Activated CD4-positive, alpha-beta memory T cell treated with anti-CD3 and anti-CD28 coated beads, Interleukin-2, amount 10 ng/mL, durations not matched to agents 7 days and 5 days (primary cell): ENCODE measurements at regions of chr12 and their contacts with region 1.

Region 1: GRCh38 chr12:53267999-53268647 is at the start of gene ESPL1:
- DNase-seq: peak; percentile 87
- H3K4me3 Mint-ChIP-seq: peak within 1 kb of the TSS; percentile 98
- H3K27ac Mint-ChIP-seq: peak within 1 kb of the TSS; percentile 90
- H3K4me1 Mint-ChIP-seq: peaks cover 53% of the 10 kb centered on the region
- H3K27me3 Mint-ChIP-seq: no peaks in the 10 kb centered on the region
- total RNA-seq, gene ESPL1: 88.4 to 90.2 TPM

Region 2: DNA sequence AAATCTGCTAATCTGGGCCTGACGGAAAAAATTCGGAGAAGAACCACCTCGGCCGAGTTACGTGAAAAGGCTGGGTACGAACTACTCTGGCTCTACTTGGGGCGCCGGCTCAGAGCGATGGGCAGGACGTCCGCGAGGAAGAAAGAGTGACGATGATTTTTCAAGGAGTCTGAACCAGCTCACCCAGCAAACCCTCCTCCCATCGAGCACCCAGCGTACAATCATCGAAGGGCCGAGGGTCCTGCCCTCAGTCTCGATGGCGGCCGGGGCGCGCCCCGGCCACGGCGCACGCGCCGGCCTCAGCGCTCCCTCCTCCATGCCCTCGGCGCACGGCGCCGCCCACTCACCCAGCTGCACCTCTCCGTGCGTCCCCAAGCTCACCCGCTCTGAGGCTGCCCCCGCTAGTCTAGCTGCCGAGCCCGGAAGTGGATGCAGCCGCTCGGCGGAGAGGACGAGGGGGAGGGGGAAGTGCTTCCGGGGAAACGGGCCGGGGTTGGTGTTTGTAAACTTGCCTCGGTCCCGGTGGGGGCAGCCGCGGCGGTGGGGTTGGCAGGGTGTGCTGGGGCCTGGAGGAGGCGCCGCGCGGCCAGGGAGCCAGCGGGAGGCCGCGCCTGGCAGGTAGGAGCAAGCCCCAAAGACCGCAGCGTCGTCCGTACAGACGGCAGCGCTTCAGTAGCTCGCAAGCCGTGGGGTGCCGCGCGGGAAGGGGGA is 87.7 kb before region 1 on chr12 and contains the starts of genes CSAD and ZNF740:
- CTCF ChIA-PET with region 1: interaction called, 13 read pairs
- POLR2A ChIA-PET with region 1: interaction called, 33 read pairs
- DNase-seq: peak; percentile 98
- H3K4me3 Mint-ChIP-seq: peak within 1 kb of the TSS; percentile 84
- H3K27ac Mint-ChIP-seq: peak within 1 kb of the TSS; percentile 93
- H3K4me1 Mint-ChIP-seq: peaks cover 58% of the 10 kb centered on the region
- H3K27me3 Mint-ChIP-seq: no peaks in the 10 kb centered on the region
- total RNA-seq, gene CSAD: 28.6 to 31.0 TPM
- total RNA-seq, gene ZNF740: 33.7 to 45.5 TPM

Region 3: DNA sequence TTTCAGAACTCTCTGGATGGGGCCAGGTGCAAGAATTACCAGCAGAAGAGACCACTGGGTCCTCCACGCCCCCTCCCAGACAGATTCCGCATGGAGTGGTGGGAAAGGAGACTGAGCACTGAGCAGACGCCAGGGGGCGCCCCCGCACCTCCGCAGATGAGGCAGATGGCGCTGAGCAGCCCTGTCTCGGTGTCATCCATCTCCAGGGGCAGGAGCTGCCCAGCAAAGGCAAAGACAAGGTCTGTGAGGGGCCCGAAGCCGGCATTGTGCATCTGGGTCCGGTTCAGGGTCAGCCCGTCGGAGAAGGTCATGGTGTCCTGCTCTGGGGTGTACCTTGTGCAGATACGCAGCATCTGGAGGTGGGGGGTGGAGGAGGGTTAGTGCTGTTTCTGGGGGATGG is 54.8 kb before region 1 on chr12:
- CTCF ChIA-PET with region 1: interaction called, 211 read pairs
- POLR2A ChIA-PET with region 1: interaction called, 93 read pairs
- DNase-seq: peak; percentile 84
- H3K4me3 Mint-ChIP-seq: no peak overlapping the region
- H3K27ac Mint-ChIP-seq: peak overlapping the region; percentile 55
- H3K4me1 Mint-ChIP-seq: peaks cover 91% of the 10 kb centered on the region
- H3K27me3 Mint-ChIP-seq: no peaks in the 10 kb centered on the region

Region 4: DNA sequence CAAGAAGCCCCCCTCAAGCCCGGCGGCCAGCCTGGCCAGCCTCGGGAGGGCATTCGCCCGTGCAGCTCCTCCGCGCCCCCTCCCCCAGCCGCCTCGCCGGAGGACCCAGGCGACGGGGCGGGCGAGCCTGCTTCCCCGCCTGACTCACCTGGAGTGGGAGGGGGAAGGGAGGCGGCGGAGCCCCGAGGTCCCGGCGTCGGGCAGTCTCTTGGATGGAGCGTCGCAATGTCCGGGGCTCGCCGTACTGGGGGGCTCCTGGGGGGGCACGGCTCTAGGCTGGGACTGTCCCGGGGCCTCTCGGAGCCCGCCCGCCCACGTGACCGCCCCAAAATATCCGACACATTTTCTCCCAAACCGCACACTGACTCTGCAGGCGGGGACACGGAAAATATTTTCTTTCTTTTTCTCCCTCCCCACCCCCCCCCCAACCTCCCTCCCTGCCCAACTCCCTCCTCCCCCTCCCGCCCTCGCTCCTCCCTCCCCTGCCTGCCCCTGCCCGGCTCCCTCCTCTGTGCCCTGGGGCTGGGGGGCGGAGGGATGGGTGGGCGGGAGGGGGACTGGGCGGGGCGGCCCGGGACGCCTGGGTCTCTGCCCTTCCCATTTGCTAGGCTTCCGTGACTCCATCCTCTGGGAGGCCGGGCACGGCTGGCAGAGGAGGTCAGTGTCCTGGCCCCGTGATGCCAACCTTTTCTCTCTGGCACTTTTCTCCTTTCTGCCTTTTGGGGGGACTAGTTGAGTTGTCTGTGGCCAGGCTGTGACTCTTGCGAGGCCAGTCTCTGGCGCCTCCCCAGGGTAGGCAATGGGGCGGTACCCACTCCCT is 36.1 kb before region 1 on chr12 and contains the start of gene RARG:
- CTCF ChIA-PET with region 1: interaction called, 5 read pairs
- POLR2A ChIA-PET with region 1: interaction called, 16 read pairs
- DNase-seq: peak; percentile 72
- H3K4me3 Mint-ChIP-seq: peak within 1 kb of the TSS; percentile 83
- H3K27ac Mint-ChIP-seq: peak within 1 kb of the TSS; percentile 79
- H3K4me1 Mint-ChIP-seq: peaks cover 68% of the 10 kb centered on the region
- H3K27me3 Mint-ChIP-seq: no peaks in the 10 kb centered on the region
- total RNA-seq, gene RARG: 46.1 to 47.4 TPM

Region 5: GRCh38 chr12:53279283-53279869 is 11.3 kb after region 1 on chr12:
- CTCF ChIA-PET with region 1: interaction called, 6 read pairs
- POLR2A ChIA-PET with region 1: interaction called, 38 read pairs
- DNase-seq: no peak
- H3K4me3 Mint-ChIP-seq: no peak overlapping the region
- H3K27ac Mint-ChIP-seq: no peak overlapping the region
- H3K4me1 Mint-ChIP-seq: peaks cover 8% of the 10 kb centered on the region
- H3K27me3 Mint-ChIP-seq: no peaks in the 10 kb centered on the region

Region 6: GRCh38 chr12:53295070-53295890 is 27.2 kb after region 1 on chr12 and contains the start of gene PFDN5:
- CTCF ChIA-PET with region 1: interaction called, 21 read pairs
- POLR2A ChIA-PET with region 1: interaction called, 64 read pairs
- DNase-seq: peak; percentile 90
- H3K4me3 Mint-ChIP-seq: peak within 1 kb of the TSS; percentile 97
- H3K27ac Mint-ChIP-seq: peak within 1 kb of the TSS; percentile 88
- H3K4me1 Mint-ChIP-seq: peaks cover 53% of the 10 kb centered on the region
- H3K27me3 Mint-ChIP-seq: no peaks in the 10 kb centered on the region
- total RNA-seq, gene PFDN5: 300 to 301 TPM